ENCODE measurements at regions of chr1 and their contacts with region 1.

Region 1: DNA sequence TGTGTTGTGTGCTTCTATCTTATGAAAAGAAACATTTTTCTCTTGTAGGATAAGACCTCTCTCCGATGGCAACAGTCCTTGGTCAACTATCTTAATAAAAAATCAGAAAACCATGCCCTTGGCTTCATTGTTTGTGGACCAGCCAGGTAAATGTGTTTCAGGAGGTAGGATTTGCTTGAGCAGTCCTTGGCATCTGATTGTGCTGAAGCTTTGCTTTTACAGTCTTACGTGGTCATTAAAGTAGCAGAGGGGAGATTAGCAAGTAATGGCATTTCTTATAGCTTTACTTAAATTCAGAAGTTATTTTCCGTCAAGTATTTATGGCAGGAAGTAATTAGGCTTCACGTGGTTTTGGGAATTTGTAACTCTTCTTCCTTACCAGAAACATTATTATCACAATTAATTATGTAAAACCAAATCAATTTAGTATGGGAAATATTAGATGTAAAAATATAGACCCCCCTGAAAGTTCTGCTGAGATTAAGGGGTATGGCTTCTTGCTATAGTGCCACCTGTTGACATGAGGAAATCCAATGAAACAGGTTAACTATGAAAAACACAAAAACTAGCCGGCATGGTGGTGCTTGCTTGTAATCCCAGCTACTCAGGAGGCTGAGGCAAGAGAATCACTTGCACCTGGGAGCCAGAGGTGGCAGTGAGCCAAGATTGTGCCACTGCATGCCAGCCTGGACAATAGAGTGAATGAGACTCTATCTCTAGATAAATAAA is 49.0 kb downstream of the MAP3K21 start:
- DNase-seq: no peak
- H3K4me3 ChIP-seq: no peak overlapping the region
- H3K27ac ChIP-seq: no peak overlapping the region
- H3K4me1 ChIP-seq: 0 out of 7 replicates have a peak, but pooled peaks cover 0 to 3% (median 0%) of the 10 kb centered on the region in 4 experiments
- H3K27me3 ChIP-seq: no peaks in the 10 kb centered on the region
- CTCF ChIP-seq: peak in 2 of 3 experiments; percentile 0 to 20; a peak in 2 of 4 replicates
- EP300 ChIP-seq: no peak
- POLR2A ChIP-seq: no peak
- RAD21 ChIP-seq: no peak

Region 2: GRCh38 chr1:233055879-233056641 is 320.5 kb before region 1 on chr1:
- CTCF ChIA-PET with region 1: no interaction called
- POLR2A ChIA-PET with region 1: no interaction called
- DNase-seq: no peak
- H3K4me3 ChIP-seq: no peak overlapping the region
- H3K27ac ChIP-seq: no peak overlapping the region
- H3K4me1 ChIP-seq: peaks cover 0 to 4% (median 0%) of the 10 kb centered on the region in 4 experiments; a peak in 1 of 7 replicates
- H3K27me3 ChIP-seq: no peaks in the 10 kb centered on the region
- CTCF ChIP-seq: no peak
- EP300 ChIP-seq: no peak
- POLR2A ChIP-seq: no peak
- RAD21 ChIP-seq: no peak

Region 3: GRCh38 chr1:233304489-233305102 is 72.0 kb before region 1 on chr1:
- CTCF ChIA-PET with region 1: interaction called, 13 read pairs
- POLR2A ChIA-PET with region 1: no interaction called
- DNase-seq: no peak
- H3K4me3 ChIP-seq: no peak overlapping the region
- H3K27ac ChIP-seq: no peak overlapping the region
- H3K4me1 ChIP-seq: peaks cover 0 to 3% (median 0%) of the 10 kb centered on the region in 4 experiments; a peak in 1 of 7 replicates
- H3K27me3 ChIP-seq: no peaks in the 10 kb centered on the region
- CTCF ChIP-seq: peak in 2 of 3 experiments; percentile 53 to 75; a peak in 2 of 4 replicates
- EP300 ChIP-seq: no peak
- POLR2A ChIP-seq: no peak
- RAD21 ChIP-seq: peak; percentile 83 to 87

Region 4: GRCh38 chr1:233424779-233425178 is 48.2 kb after region 1 on chr1:
- CTCF ChIA-PET with region 1: no interaction called
- POLR2A ChIA-PET with region 1: no interaction called
- DNase-seq: no peak
- H3K4me3 ChIP-seq: no peak overlapping the region
- H3K27ac ChIP-seq: no peak overlapping the region
- H3K4me1 ChIP-seq: no peaks in the 10 kb centered on the region
- H3K27me3 ChIP-seq: no peaks in the 10 kb centered on the region
- CTCF ChIP-seq: peak in 1 of 3 experiments; percentile 6; a peak in 1 of 4 replicates
- EP300 ChIP-seq: no peak
- POLR2A ChIP-seq: no peak
- RAD21 ChIP-seq: no peak